Activated T-helper 2 cell treated with anti-CD3 and anti-CD28 coated beads, Interferon-gamma antibody, Interleukin-2, Interleukin-4, amounts not matched to agents 10 μg/mL and 5 μg/mL and 100 μg/mL, durations not matched to agents 14 hours and 24 hours and 36 hours (primary cell): ENCODE measurements at regions of chr18 and their contacts with region 1.

Region 1: DNA sequence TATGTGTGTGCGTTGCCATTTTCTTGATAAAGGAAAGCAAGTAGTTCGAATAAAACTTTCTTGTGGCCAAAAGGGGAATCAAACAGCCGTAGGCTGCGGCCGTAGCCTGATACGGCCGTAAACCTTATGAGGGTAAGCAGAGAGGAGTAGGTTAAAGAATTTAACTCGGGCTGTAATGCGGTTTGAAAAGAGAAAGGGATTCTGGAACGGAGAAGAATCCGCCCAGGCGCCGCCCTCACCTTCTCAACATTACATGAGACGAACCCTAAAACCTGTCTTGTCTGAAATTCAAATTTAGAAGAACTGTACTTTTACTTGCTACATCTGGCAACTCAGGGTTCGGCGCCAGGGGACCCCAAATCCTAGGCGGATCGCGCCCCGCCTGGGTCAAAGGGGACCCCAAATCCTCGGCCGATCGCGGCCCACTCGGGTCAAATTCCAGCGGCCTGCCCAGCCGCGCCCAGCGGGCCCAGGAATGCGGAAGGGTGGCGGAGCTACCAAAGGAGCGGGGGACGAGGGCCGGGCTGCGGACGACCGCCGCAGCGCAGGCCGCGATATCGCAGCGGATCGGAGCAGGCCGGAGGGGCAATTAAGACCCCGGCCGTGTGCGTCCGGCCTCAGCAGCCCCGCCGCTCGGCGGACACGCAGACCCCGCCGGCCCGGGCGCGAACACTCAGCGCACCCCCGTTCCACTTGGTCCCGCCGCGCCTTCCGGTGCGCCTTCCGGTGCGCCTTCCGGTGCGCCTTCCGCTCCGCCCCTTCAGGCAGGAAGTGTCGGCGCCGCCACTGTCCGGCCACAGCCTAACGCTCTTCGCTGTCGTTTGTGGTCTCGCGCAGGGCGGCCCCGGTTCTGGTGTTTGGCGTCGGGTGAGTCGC is at the start of gene MYL12B:
- DNase-seq: peak; percentile 77
- H3K4me3 Mint-ChIP-seq: peak within 1 kb of the TSS; percentile 97
- H3K27ac Mint-ChIP-seq: peak within 1 kb of the TSS; percentile 99
- H3K4me1 Mint-ChIP-seq: peaks cover 69% of the 10 kb centered on the region
- H3K27me3 Mint-ChIP-seq: no peaks in the 10 kb centered on the region
- total RNA-seq, gene MYL12B: 243 and 245 TPM in 2 replicates

Region 2: GRCh38 chr18:2571200-2572143 is 690.1 kb before region 1 on chr18 and contains the starts of genes METTL4 and NDC80:
- intact Hi-C with region 1: loop called (anchors 5 kb)
- DNase-seq: peak; percentile 82
- H3K4me3 Mint-ChIP-seq: peak within 1 kb of the TSS; percentile 99
- H3K27ac Mint-ChIP-seq: peak within 1 kb of the TSS; percentile 98
- H3K4me1 Mint-ChIP-seq: peaks cover 52% of the 10 kb centered on the region
- H3K27me3 Mint-ChIP-seq: no peaks in the 10 kb centered on the region
- total RNA-seq, gene METTL4: 17.8 and 18.3 TPM in 2 replicates
- total RNA-seq, gene NDC80: 41.5 and 43.0 TPM in 2 replicates

Region 3: GRCh38 chr18:3286159-3286558 is 24.6 kb after region 1 on chr18:
- intact Hi-C with region 1: no loop called
- DNase-seq: no peak
- H3K4me3 Mint-ChIP-seq: no peak overlapping the region
- H3K27ac Mint-ChIP-seq: no peak overlapping the region
- H3K4me1 Mint-ChIP-seq: peaks cover 3% of the 10 kb centered on the region
- H3K27me3 Mint-ChIP-seq: peaks cover 8% of the 10 kb centered on the region

Region 4: GRCh38 chr18:3297025-3297984 is 35.7 kb after region 1 on chr18:
- intact Hi-C with region 1: loop called (anchors 2 kb)
- DNase-seq: peak; percentile 91
- H3K4me3 Mint-ChIP-seq: peak overlapping the region; percentile 87
- H3K27ac Mint-ChIP-seq: peak overlapping the region; percentile 59
- H3K4me1 Mint-ChIP-seq: peaks cover 7% of the 10 kb centered on the region
- H3K27me3 Mint-ChIP-seq: peaks cover 35% of the 10 kb centered on the region

Region 5: GRCh38 chr18:3604498-3605408 is 343.1 kb after region 1 on chr18:
- intact Hi-C with region 1: loop called (anchors 2 kb)
- DNase-seq: no peak
- H3K4me3 Mint-ChIP-seq: no peak overlapping the region
- H3K27ac Mint-ChIP-seq: no peak overlapping the region
- H3K4me1 Mint-ChIP-seq: peaks cover 16% of the 10 kb centered on the region
- H3K27me3 Mint-ChIP-seq: no peaks in the 10 kb centered on the region